Caco-2 (cell line): ENCODE measurements at regions of chr9 and their contacts with region 1.

Region 1: DNA sequence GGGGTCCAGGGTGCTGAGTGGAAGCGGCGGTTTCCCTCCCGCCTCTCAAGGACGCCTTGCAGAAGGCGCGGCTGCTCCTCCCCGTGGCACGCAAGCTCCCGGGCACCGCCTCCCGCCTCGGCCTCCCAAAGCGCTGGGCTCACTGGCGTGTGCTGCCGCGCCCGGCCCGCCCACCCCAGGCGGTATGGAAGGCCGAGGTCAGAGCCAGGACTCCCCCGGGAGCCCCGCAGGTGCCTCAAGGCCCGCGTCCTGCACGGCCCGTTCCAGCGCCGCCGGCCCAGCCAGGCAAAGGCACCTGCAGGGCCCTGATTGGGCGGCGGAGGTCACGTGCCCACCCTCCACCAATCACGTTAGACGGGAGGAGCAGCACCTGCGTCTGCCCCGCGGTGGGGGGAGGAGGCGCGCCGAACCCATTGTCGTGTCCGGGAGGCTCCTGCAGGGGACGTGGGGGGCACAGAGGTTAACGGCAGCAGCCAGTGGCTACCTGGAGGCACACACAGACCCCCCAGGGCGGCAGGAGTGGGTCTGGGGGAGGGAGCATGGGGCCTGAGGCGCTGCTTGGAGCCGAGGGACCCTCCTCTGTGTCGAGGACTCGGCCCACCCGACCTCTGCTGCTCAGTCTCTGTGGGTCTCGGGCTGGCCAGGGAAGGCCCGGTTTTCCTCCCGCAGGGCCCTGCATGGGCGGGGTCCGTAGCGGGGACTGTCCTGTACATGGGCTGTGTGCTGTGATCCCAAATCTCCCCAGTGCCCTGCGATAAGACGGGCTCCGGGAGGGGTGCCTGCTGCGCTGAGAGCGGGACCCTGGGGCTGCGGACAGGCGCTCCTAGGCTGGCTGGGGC is 2.0 kb upstream of the LCN12 start:
- DNase-seq: peak; percentile 99
- H3K4me3 ChIP-seq: peak overlapping the region; percentile 60
- H3K4me3 Mint-ChIP-seq: peak overlapping the region; percentile 76
- H3K27ac Mint-ChIP-seq: peak overlapping the region; percentile 94
- H3K4me1 ChIP-seq: peaks cover 41% of the 10 kb centered on the region
- H3K4me1 Mint-ChIP-seq: no peaks in the 10 kb centered on the region
- H3K27me3 ChIP-seq: no peaks in the 10 kb centered on the region
- H3K27me3 Mint-ChIP-seq: no peaks in the 10 kb centered on the region
- CTCF ChIP-seq: peak; percentile 15 to 41

Region 2: DNA sequence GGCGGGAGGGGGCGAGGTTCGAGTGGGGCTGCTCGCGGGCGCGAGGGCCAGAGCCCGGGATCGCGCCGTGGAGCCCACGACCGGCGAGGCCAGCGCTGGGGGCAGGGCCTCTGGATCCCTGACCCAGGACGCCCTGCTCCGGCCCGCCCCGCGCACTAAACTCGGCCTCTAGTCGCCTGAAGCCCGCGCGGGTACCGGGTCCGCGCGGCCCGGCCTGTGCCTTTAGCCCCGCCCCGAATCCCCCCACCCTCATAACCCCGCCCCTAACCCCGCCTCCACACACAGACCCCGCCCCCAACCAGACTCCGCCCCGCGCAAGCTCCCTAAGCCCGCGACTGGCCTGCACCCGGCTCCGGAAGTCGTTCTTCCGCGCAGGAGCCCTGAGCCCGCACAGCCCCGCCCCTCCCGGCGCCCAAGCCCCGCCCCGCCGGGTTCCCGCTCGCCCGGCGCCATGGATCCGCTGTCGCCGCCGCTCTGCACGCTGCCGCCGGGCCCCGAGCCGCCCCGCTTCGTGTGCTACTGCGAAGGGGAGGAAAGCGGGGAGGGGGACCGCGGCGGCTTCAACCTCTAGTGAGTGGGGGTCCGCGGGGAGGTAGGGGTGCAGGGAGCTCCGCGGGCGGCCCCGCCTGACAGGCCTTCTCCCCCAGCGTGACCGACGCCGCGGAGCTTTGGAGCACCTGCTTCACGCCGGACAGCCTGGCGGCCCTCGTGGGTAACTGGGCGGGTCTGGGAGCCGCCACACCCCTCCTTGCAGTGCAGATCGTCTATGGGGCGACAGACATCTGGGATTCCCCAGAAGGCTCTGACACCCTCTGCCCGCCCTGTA is 42.2 kb after region 1 on chr9 and contains the start of gene PAXX:
- CTCF ChIA-PET with region 1: interaction called, 4 read pairs
- POLR2A ChIA-PET with region 1: interaction called, 13 read pairs
- intact Hi-C with region 1: loop called (anchors 2 kb)
- DNase-seq: peak; percentile 93 to 96
- H3K4me3 ChIP-seq: peak within 1 kb of the TSS; percentile 87
- H3K4me3 Mint-ChIP-seq: peak within 1 kb of the TSS; percentile 83
- H3K27ac Mint-ChIP-seq: peak within 1 kb of the TSS; percentile 82
- H3K4me1 ChIP-seq: peaks cover 55% of the 10 kb centered on the region
- H3K4me1 Mint-ChIP-seq: peaks cover 30% of the 10 kb centered on the region
- H3K27me3 ChIP-seq: no peaks in the 10 kb centered on the region
- H3K27me3 Mint-ChIP-seq: no peaks in the 10 kb centered on the region
- CTCF ChIP-seq: no peak
- total RNA-seq, gene PAXX: 66.2 TPM in 2 replicates

Region 3: DNA sequence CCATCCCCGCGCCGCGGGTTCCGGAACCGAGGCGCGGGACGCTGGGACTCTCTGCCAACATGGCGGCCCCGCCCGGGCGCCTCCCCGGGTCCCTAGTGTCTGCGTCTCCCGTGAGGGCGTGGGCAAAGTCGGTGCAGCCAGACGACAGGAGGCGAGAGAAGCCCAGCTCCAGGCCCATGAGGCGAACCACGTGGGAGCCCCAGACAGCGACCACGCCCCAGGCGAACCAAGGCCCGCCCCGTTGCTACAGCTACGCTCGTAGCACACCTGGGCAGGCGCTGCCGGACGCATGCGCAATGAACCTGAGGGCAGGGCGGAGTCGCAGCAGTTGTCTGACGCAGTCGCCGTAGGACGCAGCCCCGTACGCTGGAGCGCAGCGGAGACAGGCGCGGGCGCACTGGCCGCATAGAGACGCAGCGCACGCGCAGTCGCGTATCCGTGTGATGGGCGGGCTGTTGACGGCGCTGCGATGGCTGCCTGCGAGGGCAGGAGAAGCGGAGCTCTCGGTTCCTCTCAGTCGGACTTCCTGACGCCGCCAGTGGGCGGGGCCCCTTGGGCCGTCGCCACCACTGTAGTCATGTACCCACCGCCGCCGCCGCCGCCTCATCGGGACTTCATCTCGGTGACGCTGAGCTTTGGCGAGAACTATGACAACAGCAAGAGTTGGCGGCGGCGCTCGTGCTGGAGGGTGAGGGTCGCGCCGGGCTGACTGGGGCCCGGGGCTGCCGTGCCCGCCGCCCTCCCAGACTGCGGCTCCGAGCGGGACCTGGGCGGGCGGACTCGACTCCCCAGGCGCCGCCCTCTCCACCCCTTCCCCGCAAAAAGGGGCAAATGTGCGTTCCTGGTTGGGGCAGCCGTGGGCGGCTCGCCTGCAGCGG is 136.7 kb after region 1 on chr9 and contains the start of gene MAN1B1:
- CTCF ChIA-PET with region 1: interaction called, 10 read pairs
- POLR2A ChIA-PET with region 1: no interaction called
- intact Hi-C with region 1: no loop called
- DNase-seq: peak; percentile 99
- H3K4me3 ChIP-seq: peak within 1 kb of the TSS; percentile 75
- H3K4me3 Mint-ChIP-seq: peak within 1 kb of the TSS; percentile 100
- H3K27ac Mint-ChIP-seq: peak within 1 kb of the TSS; percentile 100
- H3K4me1 ChIP-seq: peaks cover 7% of the 10 kb centered on the region
- H3K4me1 Mint-ChIP-seq: peaks cover 15% of the 10 kb centered on the region
- H3K27me3 ChIP-seq: no peaks in the 10 kb centered on the region
- H3K27me3 Mint-ChIP-seq: no peaks in the 10 kb centered on the region
- CTCF ChIP-seq: no peak
- total RNA-seq, gene MAN1B1: 57.7 and 58.0 TPM in 2 replicates

Region 4: DNA sequence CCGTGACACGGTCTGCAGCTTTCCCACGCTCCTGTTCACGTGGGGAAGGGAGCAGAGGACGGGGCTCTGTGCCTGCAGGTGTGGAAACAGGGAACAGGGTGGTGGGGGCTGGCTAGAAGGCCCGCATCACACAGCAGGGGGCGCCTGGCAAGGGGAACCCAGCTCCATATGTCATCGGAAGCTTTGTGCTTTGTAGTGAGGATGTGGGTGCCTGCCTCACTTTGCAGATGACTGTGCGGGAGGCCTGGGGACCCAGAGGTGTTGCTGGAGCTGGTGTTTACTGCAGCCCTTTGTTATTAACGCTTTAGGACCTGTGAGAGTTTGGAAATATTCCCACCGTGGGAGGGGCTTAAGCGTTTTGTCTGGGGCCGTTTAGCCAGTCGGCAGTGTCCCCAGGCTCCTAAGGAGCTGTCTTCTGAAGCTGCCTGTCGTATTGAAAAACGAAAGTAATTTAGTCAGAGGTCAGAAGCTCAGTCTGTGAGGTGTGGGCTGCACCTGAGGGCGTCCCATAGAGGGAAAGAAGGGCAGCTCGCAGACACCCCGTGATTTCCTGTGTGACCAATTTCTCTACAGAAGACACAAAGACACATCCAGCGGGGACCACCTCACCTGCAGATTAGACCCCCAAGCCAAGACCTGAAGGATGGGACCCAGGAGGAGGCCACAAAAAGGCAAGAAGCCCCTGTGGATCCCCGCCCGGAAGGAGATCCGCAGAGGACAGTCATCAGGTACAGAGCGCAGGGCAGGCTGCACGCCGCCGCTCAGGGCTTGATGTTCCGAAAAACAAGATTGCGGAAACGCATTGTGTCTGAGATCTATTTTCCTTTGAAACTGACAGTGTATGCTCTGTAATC is 145.9 kb after region 1 on chr9:
- CTCF ChIA-PET with region 1: interaction called, 12 read pairs
- POLR2A ChIA-PET with region 1: no interaction called
- intact Hi-C with region 1: no loop called
- DNase-seq: no peak
- H3K4me3 ChIP-seq: no peak overlapping the region
- H3K4me3 Mint-ChIP-seq: no peak overlapping the region
- H3K27ac Mint-ChIP-seq: no peak overlapping the region
- H3K4me1 ChIP-seq: no peaks in the 10 kb centered on the region
- H3K4me1 Mint-ChIP-seq: no peaks in the 10 kb centered on the region
- H3K27me3 ChIP-seq: no peaks in the 10 kb centered on the region
- H3K27me3 Mint-ChIP-seq: no peaks in the 10 kb centered on the region
- CTCF ChIP-seq: peak in 1 of 2 experiments; percentile 45